ENCODE measurements at regions of chr3 and their contacts with region 1.

Region 1: GRCh38 chr3:50088725-50089608 is at the start of gene RBM5:
- DNase-seq: peak; percentile 93 to 95
- ATAC-seq: peak; percentile 99 to 100 (median 99)
- H3K4me3 ChIP-seq: peak within 1 kb of the TSS; percentile 100
- H3K27ac ChIP-seq: peak within 1 kb of the TSS; percentile 99
- H3K4me1 ChIP-seq: peaks cover 20% of the 10 kb centered on the region
- H3K27me3 ChIP-seq: no peaks in the 10 kb centered on the region
- CTCF ChIP-seq: no peak
- total RNA-seq, gene RBM5: 35.6 to 61.4 (median 55.2) TPM

Region 2: DNA sequence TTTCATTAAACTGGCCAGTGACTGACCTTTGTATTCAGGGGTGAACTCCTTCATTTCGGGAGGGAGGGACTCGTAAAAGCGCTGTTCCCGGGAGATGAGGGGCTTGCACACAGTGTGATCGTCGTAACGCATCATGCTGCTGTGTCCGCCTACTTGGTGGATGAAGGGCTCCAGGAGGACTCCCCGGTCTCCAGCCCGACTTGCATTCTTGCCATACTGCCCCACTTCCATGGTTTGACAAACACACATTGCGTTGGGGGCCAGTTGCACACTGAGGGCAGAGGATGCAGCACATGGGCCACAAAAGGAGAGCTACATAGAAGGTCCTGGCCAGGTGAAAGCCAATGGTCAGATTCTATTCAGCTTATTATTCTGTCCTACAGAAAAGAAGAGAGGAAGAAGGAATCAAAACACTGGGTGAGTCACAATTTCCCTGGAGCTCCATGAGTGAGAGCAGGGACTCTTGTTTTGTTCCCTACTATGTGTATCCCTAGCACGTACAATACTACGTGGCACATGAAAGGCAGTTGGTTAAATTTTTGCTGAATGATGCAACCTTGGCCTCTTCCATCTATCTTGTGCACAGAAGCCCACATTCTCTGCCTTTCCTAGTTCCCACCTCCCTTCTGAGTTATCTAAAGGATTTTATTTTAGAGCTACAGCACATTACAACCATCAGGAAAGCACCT is 341.0 kb before region 1 on chr3:
- intact Hi-C with region 1: no loop called
- DNase-seq: no peak
- ATAC-seq: no peak
- H3K4me3 ChIP-seq: no peak overlapping the region
- H3K27ac ChIP-seq: no peak overlapping the region
- H3K4me1 ChIP-seq: no peaks in the 10 kb centered on the region
- H3K27me3 ChIP-seq: no peaks in the 10 kb centered on the region
- CTCF ChIP-seq: no peak

Region 3: DNA sequence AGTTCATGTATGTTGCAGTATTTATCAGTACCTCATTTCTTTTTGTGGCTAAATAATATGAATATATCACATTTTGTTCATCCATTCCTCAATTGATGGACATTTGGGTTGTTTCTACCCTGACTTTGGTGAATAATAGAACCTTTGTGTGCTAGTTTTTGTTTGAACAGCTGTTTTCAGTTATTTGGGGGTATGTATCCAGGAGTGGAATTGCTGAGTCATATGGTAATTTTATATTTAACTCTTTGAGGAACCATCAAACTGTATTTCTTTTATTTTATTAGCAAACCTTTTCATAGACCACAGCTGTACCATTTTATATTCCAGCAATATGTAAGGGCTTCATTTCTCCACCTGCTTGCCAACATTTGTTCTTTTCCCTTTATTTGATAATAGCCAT is 38.6 kb before region 1 on chr3:
- intact Hi-C with region 1: no loop called
- DNase-seq: no peak
- ATAC-seq: no peak
- H3K4me3 ChIP-seq: no peak overlapping the region
- H3K27ac ChIP-seq: no peak overlapping the region
- H3K4me1 ChIP-seq: no peaks in the 10 kb centered on the region
- H3K27me3 ChIP-seq: no peaks in the 10 kb centered on the region
- CTCF ChIP-seq: no peak

Region 4: GRCh38 chr3:50112462-50112861 is 23.5 kb after region 1 on chr3:
- intact Hi-C with region 1: loop called in 1 of 2 experiments (anchors 2 kb)
- DNase-seq: no peak
- ATAC-seq: peak; percentile 75 to 84 (median 82)
- H3K4me3 ChIP-seq: no peak overlapping the region
- H3K27ac ChIP-seq: peak overlapping the region; percentile 77
- H3K4me1 ChIP-seq: peaks cover 30% of the 10 kb centered on the region
- H3K27me3 ChIP-seq: no peaks in the 10 kb centered on the region
- CTCF ChIP-seq: no peak

Region 5: GRCh38 chr3:50365080-50365841 is 276.3 kb after region 1 on chr3:
- intact Hi-C with region 1: no loop called
- DNase-seq: peak; percentile 79 to 90
- ATAC-seq: peak; percentile 54 to 93 (median 84)
- H3K4me3 ChIP-seq: peak overlapping the region; percentile 57
- H3K27ac ChIP-seq: no peak overlapping the region
- H3K4me1 ChIP-seq: no peaks in the 10 kb centered on the region
- H3K27me3 ChIP-seq: peaks cover 0 to 3% (median 0%) of the 10 kb centered on the region in 3 donors
- CTCF ChIP-seq: no peak

Region 6: GRCh38 chr3:50627407-50628051 is 538.6 kb after region 1 on chr3:
- intact Hi-C with region 1: no loop called
- DNase-seq: peak; percentile 83 to 95
- ATAC-seq: peak; percentile 80 to 88 (median 83)
- H3K4me3 ChIP-seq: no peak overlapping the region
- H3K27ac ChIP-seq: peak overlapping the region; percentile 88
- H3K4me1 ChIP-seq: peaks cover 85% of the 10 kb centered on the region
- H3K27me3 ChIP-seq: no peaks in the 10 kb centered on the region
- CTCF ChIP-seq: peak; percentile 28

Measured in psoas muscle (tissue), 8 donors.